ENCODE measurements at regions of chr20 and their contacts with region 1.

Region 1: GRCh38 chr20:24992487-24993205 is at the start of gene APMAP:
- DNase-seq: peak; percentile 96
- H3K4me3 ChIP-seq: peak within 1 kb of the TSS; percentile 92
- H3K27ac ChIP-seq: peak within 1 kb of the TSS; percentile 85
- H3K4me1 ChIP-seq: peaks cover 18% of the 10 kb centered on the region
- H3K27me3 ChIP-seq: no peaks in the 10 kb centered on the region
- CTCF ChIP-seq: no peak
- total RNA-seq, gene APMAP: 67.9 and 70.3 TPM in 2 replicates

Region 2: GRCh38 chr20:24936526-24937407 is 55.9 kb before region 1 on chr20:
- CTCF ChIA-PET with region 1: no interaction called
- POLR2A ChIA-PET with region 1: no interaction called
- intact Hi-C with region 1: no loop called
- DNase-seq: no peak
- H3K4me3 ChIP-seq: no peak overlapping the region
- H3K27ac ChIP-seq: no peak overlapping the region
- H3K4me1 ChIP-seq: no peaks in the 10 kb centered on the region
- H3K27me3 ChIP-seq: no peaks in the 10 kb centered on the region
- CTCF ChIP-seq: no peak

Region 3: DNA sequence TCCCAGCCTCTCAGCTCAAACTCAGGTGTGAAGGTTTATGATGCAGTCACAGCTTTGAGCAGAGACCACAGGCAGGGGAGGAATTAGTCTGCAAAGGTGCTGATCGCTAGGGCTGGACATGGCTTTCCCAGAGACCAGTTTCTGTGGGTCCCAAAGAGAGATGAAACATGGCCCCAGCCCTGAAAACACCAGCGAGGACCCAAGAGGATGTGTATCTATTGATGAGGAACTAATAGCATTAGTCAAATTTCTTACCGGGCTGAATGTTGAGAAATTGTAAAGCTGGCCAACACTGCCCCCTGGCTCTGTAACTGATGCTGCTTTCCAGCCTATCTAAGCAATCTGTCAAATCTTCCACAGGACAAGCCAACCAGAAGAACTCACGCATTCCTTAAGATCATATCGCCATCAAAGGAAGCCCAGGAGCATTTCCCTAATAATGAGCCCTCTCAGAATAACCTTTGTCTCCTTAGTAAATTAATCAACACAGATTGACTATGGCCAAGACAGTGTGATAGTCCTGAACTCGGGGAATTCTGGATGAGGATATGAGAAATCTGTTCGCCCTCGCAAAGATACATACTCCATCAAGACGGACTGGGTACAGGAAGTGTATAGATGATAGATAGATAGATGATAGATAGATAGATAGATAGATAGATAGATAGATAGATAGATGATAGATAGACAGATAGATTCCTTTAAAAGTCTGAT is 73.1 kb after region 1 on chr20:
- CTCF ChIA-PET with region 1: no interaction called
- POLR2A ChIA-PET with region 1: no interaction called
- intact Hi-C with region 1: loop called (anchors 1 kb)
- DNase-seq: peak; percentile 74
- H3K4me3 ChIP-seq: no peak overlapping the region
- H3K27ac ChIP-seq: no peak overlapping the region
- H3K4me1 ChIP-seq: no peaks in the 10 kb centered on the region
- H3K27me3 ChIP-seq: peaks cover 55% of the 10 kb centered on the region
- CTCF ChIP-seq: peak; percentile 86

Region 4: DNA sequence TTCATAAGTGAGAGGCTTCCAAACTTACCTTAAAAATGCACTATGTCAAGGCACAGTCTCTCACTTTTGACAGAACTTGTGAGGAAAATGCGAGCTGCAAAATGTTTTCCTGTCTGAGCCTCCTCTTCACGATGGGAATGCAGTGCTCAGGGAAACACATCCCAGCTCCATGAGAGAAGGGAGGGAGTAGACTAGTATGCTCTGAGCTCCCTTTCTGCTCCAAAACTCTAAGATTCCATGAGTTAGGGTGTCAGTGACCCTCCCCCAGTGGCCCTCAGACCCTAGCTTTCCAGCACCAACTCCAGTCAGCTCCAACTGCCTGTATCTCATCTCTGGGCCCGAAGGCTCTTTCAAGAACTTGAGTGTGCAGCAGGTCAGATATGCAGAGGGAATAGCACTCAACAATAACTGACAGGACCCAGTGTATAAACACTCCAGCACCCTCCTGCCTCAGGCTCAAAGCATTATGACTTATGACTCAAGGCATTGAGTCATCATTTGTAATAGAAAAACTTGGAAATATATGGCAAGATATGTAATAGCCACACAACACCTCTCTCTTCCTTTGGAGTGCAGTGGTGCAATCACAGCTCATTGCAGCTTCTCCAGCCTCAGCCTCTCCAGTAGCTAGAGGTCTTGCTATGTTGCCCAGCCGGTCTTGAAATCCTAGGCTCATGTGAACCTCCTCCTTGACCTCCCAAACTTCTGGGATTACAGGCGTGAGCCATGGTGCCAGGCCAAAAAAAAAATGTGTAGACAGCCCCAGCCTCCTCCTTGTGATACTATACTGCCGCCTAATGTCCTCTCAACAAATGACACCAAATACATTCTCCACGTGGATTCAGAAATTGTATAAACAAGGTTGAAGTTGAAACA is 186.2 kb after region 1 on chr20:
- CTCF ChIA-PET with region 1: no interaction called
- POLR2A ChIA-PET with region 1: no interaction called
- intact Hi-C with region 1: loop called (anchors 1 kb)
- DNase-seq: peak; percentile 49
- H3K4me3 ChIP-seq: no peak overlapping the region
- H3K27ac ChIP-seq: no peak overlapping the region
- H3K4me1 ChIP-seq: no peaks in the 10 kb centered on the region
- H3K27me3 ChIP-seq: peaks cover 4% of the 10 kb centered on the region
- CTCF ChIP-seq: peak; percentile 81

Region 5: DNA sequence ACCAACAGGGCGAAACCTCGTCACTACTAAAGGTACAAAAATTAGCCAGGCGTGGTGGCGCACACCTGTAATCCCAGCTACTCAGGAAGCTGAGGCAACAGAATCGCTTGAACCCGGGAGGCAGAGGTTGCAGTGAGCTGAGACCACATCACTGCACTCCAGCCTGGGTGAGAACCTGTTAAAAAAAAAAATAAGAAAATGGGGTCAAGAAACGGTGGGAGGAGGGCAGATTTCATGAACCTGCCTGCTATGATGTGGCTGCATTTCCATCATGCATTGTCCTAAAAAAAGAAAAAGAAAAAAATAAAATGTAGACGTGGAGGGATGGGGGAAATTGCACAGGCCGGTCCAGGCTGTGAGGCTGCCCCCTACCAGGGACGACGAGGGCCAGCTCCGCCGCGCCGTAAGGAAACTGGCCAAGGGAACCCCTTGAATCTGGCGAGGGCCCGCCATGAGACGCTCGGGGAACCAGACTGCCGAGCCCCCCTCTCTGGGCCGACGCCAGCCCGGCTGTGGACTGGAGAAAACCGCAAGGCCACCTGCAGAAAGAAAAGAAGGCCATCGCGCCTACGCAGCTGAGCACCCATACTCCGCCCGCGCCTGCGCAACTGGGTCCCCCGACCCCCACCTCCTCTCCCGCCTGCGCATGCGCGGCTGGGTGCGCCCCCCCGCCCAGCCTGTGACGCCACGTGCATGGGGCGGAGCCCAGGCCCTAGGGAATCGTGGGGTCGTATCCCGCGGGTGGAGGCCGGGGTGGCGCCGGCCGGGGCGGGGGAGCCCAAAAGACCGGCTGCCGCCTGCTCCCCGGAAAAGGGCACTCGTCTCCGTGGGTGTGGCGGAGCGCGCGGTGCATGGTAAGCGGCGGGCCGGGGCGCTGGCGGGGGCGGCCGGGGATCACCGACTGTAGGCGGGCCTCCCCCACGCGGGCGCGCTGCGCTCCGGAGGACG is 202.6 kb after region 1 on chr20 and contains the start of gene ENTPD6:
- CTCF ChIA-PET with region 1: no interaction called
- POLR2A ChIA-PET with region 1: no interaction called
- intact Hi-C with region 1: loop called (anchors 5 kb)
- DNase-seq: peak; percentile 95
- H3K4me3 ChIP-seq: peak within 1 kb of the TSS; percentile 85
- H3K27ac ChIP-seq: peak within 1 kb of the TSS; percentile 87
- H3K4me1 ChIP-seq: no peaks in the 10 kb centered on the region
- H3K27me3 ChIP-seq: peaks cover 10% of the 10 kb centered on the region
- CTCF ChIP-seq: peak; percentile 24; the same call in 1 of the 2 replicates
- total RNA-seq, gene ENTPD6: 50.2 and 53.2 TPM in 2 replicates

Region 6: DNA sequence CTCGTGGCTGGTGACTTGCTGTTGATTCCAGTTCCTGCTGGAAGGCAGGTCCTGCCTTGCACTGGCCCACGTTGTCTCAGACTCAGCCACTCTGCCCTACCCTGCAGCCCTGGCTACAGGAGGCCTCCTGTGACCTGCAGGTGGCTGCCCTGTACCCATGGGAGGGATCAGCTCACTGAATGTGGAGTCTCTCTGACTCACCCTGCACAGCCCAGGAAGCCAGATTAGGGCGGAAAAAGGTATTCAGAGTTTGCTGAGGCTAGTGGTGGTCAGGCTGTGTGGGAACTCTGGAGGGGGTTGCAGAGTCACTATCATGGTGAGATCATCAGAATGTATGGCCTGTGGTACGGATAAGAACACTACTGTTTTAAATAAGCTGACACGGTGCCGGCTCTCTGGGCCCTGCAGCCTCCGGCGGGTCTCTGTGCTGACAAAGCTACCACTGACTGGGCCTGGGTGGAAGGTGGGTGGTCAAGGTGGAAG is 230.6 kb after region 1 on chr20:
- CTCF ChIA-PET with region 1: no interaction called
- POLR2A ChIA-PET with region 1: no interaction called
- intact Hi-C with region 1: loop called (anchors 10 kb)
- DNase-seq: peak; percentile 43
- H3K4me3 ChIP-seq: no peak overlapping the region
- H3K27ac ChIP-seq: no peak overlapping the region
- H3K4me1 ChIP-seq: peaks cover 3% of the 10 kb centered on the region
- H3K27me3 ChIP-seq: no peaks in the 10 kb centered on the region
- CTCF ChIP-seq: no peak

Region 7: DNA sequence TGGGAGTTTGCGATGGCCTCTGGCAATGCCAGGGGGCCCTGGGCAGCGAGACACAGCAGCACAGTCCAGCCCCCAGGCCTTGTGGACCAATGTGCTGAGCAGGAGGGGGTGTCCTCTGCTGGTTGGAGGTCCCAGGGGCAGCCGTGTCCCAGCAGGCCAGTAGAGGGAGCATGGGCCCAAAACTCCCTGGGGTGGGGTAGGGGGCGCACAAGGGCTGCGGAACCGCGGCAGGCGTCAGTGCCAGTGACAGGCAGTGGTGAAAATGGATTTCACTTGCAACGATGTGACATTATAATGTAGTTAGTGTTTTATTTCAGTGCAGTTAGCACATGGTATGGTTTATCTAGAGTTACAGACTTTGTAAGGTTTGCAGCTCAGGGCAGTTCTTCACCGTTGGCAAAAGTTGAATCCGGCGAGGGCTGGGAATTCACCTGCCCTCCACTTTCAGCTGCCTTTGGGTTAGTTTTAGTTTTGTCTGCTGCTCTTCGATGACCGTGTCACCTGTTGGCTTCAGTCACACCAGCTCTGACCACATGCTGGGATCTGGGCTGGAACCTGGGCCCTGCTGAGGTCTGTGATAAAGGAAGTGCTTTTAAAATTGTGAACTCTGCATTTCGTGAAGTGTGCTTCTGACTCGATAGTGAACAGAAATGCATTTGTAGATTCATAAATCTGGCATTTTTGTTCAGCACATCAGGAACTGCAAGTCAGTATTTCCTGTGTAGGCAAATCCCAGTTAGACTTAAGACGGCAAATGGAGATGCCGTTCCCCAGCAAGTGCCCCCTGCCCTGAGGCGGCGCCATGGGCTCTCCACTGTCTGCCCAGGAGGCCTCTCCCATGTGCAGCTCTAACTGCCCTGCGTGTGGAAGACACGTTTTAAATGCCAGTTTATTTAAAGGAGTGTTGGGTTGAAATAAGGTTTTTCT is 302.1 kb after region 1 on chr20:
- CTCF ChIA-PET with region 1: no interaction called
- POLR2A ChIA-PET with region 1: no interaction called
- intact Hi-C with region 1: loop called (anchors 2 kb)
- DNase-seq: peak; percentile 70
- H3K4me3 ChIP-seq: no peak overlapping the region
- H3K27ac ChIP-seq: no peak overlapping the region
- H3K4me1 ChIP-seq: no peaks in the 10 kb centered on the region
- H3K27me3 ChIP-seq: no peaks in the 10 kb centered on the region
- CTCF ChIP-seq: peak; percentile 94

Region 8: GRCh38 chr20:25399037-25399430 is 406.4 kb after region 1 on chr20:
- CTCF ChIA-PET with region 1: interaction called, 6 read pairs
- POLR2A ChIA-PET with region 1: no interaction called
- intact Hi-C with region 1: loop called (anchors 2 kb)
- DNase-seq: peak; percentile 81
- H3K4me3 ChIP-seq: no peak overlapping the region
- H3K27ac ChIP-seq: no peak overlapping the region
- H3K4me1 ChIP-seq: no peaks in the 10 kb centered on the region
- H3K27me3 ChIP-seq: no peaks in the 10 kb centered on the region
- CTCF ChIP-seq: peak; percentile 67

Measured in A673 (cell line).